ENCODE measurements at regions of chr20 and their contacts with region 1.

Region 1: GRCh38 chr20:21303061-21303871 is at the start of gene XRN2:
- DNase-seq: peak; percentile 96
- H3K4me3 Mint-ChIP-seq: peak within 1 kb of the TSS; percentile 94
- H3K27ac Mint-ChIP-seq: peak within 1 kb of the TSS; percentile 96
- H3K4me1 Mint-ChIP-seq: peaks cover 29% of the 10 kb centered on the region
- H3K27me3 Mint-ChIP-seq: no peaks in the 10 kb centered on the region
- total RNA-seq, gene XRN2: 76.5 to 81.9 TPM

Region 2: DNA sequence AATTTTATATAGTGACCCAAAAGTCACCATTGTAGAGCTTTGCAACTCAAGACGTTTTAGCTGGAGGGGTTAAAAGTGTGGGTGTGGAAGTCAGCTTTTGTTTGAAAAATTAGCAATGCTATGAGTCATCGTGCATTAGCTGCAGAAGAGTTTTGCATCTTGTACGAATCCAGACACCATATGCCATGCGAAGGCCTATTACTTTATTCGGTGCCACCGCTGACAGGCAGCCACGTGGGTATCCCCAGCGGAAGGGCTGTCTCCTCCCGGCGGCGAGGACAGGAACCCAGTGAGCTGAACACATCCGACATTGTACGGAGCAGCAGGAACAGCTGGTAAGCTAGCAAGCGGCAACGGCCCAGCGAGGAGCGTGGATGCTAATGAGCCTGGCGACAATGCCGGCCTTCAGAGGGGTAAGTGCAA is 851.0 kb before region 1 on chr20:
- CTCF ChIA-PET with region 1: no interaction called
- intact Hi-C with region 1: loop called (anchors 10 kb)
- DNase-seq: peak; percentile 83
- H3K4me3 Mint-ChIP-seq: peak overlapping the region; percentile 67
- H3K27ac Mint-ChIP-seq: peak overlapping the region; percentile 56
- H3K4me1 Mint-ChIP-seq: peaks cover 36% of the 10 kb centered on the region
- H3K27me3 Mint-ChIP-seq: no peaks in the 10 kb centered on the region

Region 3: GRCh38 chr20:21325296-21325695 is 22.0 kb after region 1 on chr20:
- CTCF ChIA-PET with region 1: no interaction called
- intact Hi-C with region 1: loop called (anchors 1 kb)
- DNase-seq: no peak
- H3K4me3 Mint-ChIP-seq: peak overlapping the region; percentile 2
- H3K27ac Mint-ChIP-seq: peak overlapping the region; percentile 80
- H3K4me1 Mint-ChIP-seq: peaks cover 58% of the 10 kb centered on the region
- H3K27me3 Mint-ChIP-seq: no peaks in the 10 kb centered on the region

Measured in activated naive CD4-positive, alpha-beta T cell treated with anti-CD3 and anti-CD28 coated beads for 36 hours (primary cell).